ENCODE measurements at regions of chr3 and their contacts with region 1.

Region 1: GRCh38 chr3:25856902-25857518 is 67.1 kb downstream of the OXSM start:
- DNase-seq: peak; percentile 68
- ATAC-seq: no peak
- H3K4me3 ChIP-seq: no peak overlapping the region
- H3K27ac ChIP-seq: no peak overlapping the region
- H3K4me1 ChIP-seq: peaks cover 32% of the 10 kb centered on the region
- H3K27me3 ChIP-seq: no peaks in the 10 kb centered on the region
- CTCF ChIP-seq: peak; percentile 87

Region 2: DNA sequence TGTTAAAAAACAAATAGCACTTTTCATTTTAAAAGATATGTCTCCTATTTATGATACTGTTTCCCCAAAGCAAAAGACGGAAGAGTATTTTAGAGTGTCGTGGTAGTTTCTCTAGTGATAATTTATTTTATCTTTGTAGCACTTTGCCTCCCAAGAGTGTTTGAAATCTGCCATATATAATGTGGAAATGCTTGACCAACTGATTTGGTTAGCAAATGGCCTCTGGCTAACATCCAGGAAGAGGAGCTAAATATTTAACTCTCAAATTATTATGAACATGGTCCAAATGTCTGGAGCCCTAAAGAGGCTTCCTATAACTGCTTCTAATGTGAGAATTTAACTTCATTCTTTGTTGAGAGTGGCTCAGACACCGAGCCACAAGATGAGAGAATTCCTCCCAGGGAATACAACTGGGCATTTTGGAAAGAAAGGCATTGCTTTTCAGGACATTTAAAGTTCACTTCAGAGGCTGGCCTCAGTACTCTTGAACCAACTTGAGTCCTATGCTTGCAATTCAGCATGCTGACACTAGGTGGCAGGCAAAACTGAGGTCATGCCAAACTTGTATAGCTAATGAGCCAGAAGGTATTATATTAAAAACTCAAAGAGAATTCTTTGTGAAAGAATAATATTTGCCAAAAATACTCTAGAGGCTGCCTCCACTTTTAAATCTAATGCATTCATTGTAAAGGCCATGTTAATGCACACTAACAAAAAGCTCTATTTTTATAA is 324.4 kb before region 1 on chr3:
- CTCF ChIA-PET with region 1: interaction called, 16 read pairs
- POLR2A ChIA-PET with region 1: no interaction called
- intact Hi-C with region 1: no loop called
- DNase-seq: peak; percentile 72
- ATAC-seq: peak; percentile 35; the same call in 1 of the 2 replicates
- H3K4me3 ChIP-seq: no peak overlapping the region
- H3K27ac ChIP-seq: no peak overlapping the region
- H3K4me1 ChIP-seq: no peaks in the 10 kb centered on the region
- H3K27me3 ChIP-seq: peaks cover 24% of the 10 kb centered on the region
- CTCF ChIP-seq: peak; percentile 88

Region 3: GRCh38 chr3:25723802-25724201 is 133.2 kb before region 1 on chr3:
- CTCF ChIA-PET with region 1: no interaction called
- POLR2A ChIA-PET with region 1: no interaction called
- intact Hi-C with region 1: no loop called
- DNase-seq: no peak
- ATAC-seq: no peak
- H3K4me3 ChIP-seq: no peak overlapping the region
- H3K27ac ChIP-seq: no peak overlapping the region
- H3K4me1 ChIP-seq: peaks cover 15% of the 10 kb centered on the region
- H3K27me3 ChIP-seq: no peaks in the 10 kb centered on the region
- CTCF ChIP-seq: no peak

Region 4: DNA sequence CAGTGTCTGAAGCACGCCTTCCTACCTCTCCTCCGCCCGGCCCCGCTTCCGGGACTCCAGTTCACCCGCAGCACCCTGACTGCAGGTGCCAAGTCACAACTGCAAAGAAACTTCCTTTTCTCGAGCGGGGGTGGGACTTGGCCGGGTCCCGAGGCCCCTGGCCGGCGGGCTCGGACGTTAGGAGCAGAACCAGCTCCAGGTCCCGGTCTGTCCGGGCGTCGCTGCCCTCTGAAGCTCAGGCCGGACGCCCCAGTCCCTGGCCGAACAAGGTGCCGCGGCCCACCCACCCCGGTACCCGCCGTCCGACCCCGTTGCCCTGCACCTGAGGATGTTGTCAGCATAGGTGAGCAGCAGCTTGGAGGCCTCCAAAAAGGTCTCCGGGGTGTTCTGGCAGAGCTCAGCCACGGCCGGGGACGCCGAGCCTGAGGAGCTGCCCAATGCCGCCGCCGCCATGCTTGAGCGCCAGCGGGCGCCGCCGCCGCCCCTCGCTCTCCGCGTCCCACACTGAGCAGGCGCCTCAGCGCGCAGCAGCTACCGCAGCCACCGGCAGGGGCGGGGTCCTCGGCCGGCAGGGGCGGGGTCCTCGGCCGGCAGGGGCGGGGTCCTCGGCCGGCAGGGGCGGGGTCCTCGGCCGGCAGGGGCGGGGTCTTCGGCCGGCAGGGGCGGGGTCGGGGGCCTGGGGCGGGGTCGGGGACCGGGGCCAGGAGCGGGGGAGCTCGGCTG is 73.9 kb before region 1 on chr3 and contains the start of gene NGLY1:
- CTCF ChIA-PET with region 1: no interaction called
- POLR2A ChIA-PET with region 1: interaction called, 4 read pairs
- intact Hi-C with region 1: loop called (anchors 2 kb)
- DNase-seq: peak; percentile 83
- ATAC-seq: peak; percentile 90
- H3K4me3 ChIP-seq: peak within 1 kb of the TSS; percentile 87
- H3K27ac ChIP-seq: peak within 1 kb of the TSS; percentile 40
- H3K4me1 ChIP-seq: peaks cover 31% of the 10 kb centered on the region
- H3K27me3 ChIP-seq: no peaks in the 10 kb centered on the region
- CTCF ChIP-seq: no peak
- total RNA-seq, gene NGLY1: 47.7 and 49.4 TPM in 2 replicates

Region 5: DNA sequence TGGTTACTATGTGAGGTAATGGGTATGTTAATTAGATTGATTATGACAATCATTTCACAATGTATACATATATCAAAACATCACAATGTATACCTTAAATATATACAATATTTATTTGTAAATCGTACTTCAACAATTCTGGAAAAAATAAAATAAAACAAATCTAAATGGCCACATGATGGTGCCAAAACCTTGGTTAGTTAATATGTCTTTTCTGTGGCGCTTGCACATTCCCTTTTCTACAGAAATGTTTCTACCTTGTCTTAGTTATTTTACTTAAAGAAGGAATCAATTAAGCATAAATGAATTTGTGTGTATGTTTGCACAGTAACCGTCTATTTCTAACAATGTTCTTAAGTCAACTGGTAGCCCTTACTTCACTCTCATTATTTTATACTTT is 13.7 kb before region 1 on chr3:
- CTCF ChIA-PET with region 1: no interaction called
- POLR2A ChIA-PET with region 1: interaction called, 3 read pairs
- intact Hi-C with region 1: loop called (anchors 1 kb)
- DNase-seq: peak; percentile 60
- ATAC-seq: peak; percentile 31; the same call in 1 of the 2 replicates
- H3K4me3 ChIP-seq: no peak overlapping the region
- H3K27ac ChIP-seq: no peak overlapping the region
- H3K4me1 ChIP-seq: no peaks in the 10 kb centered on the region
- H3K27me3 ChIP-seq: no peaks in the 10 kb centered on the region
- CTCF ChIP-seq: peak; percentile 61

Region 6: GRCh38 chr3:25885544-25885943 is 28.5 kb after region 1 on chr3:
- CTCF ChIA-PET with region 1: no interaction called
- POLR2A ChIA-PET with region 1: interaction called, 10 read pairs
- intact Hi-C with region 1: loop called (anchors 5 kb)
- DNase-seq: peak; percentile 68
- ATAC-seq: peak; percentile 83
- H3K4me3 ChIP-seq: peak overlapping the region; percentile 26; the same call in 1 of the 2 replicates
- H3K27ac ChIP-seq: no peak overlapping the region
- H3K4me1 ChIP-seq: peaks cover 11% of the 10 kb centered on the region
- H3K27me3 ChIP-seq: no peaks in the 10 kb centered on the region
- CTCF ChIP-seq: no peak

Region 7: GRCh38 chr3:26260139-26260538 is 403.1 kb after region 1 on chr3:
- CTCF ChIA-PET with region 1: no interaction called
- POLR2A ChIA-PET with region 1: no interaction called
- intact Hi-C with region 1: no loop called
- DNase-seq: no peak
- ATAC-seq: no peak
- H3K4me3 ChIP-seq: no peak overlapping the region
- H3K27ac ChIP-seq: no peak overlapping the region
- H3K4me1 ChIP-seq: no peaks in the 10 kb centered on the region
- H3K27me3 ChIP-seq: no peaks in the 10 kb centered on the region
- CTCF ChIP-seq: no peak

Measured in PC-3 (cell line).